ENCODE measurements at regions of chr4 and their contacts with region 1.

Region 1: DNA sequence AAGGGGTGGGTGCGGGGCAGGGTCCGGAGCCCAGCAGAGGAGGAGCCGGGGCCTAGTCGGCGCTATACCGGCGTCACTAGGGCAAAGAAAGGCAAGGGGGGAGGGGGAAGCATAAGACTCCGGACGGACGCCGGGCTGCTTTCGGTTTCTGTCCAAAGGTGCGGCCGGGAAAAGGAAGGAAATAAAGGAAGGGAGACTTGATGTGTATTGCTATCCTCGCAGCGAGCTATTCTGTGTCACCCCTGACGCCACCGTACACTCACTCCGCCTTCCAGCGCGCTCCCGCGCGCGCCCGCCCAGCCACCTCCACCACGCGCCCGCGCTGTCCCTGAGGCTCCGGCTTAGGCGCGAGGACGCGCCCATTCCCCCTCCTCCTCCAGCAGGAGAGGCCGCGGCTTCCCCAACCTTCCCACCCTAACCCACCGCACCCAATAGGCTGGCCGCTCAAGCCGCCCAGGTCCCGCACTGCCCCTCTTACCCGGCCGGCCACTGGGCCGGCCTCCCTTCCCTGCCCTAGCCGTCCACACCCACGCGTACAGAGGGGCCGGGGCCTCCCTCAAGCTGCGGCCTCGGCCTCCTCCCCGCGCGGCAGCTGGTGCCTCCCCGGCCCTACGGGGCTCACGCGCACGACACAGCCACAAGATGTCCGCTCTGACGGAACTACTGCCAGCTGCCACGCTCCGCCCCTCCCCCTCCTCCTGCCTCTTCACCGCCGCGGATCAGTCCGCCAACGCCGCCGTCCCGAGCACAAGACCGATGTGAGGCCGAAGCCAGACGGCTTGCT is at the start of gene UBE2D3:
- DNase-seq: peak; percentile 95 to 97 (median 96)
- H3K4me3 ChIP-seq: peak within 1 kb of the TSS; percentile 96 to 97
- H3K4me3 Mint-ChIP-seq: no peak within 1 kb of the TSS
- H3K27ac ChIP-seq: peak within 1 kb of the TSS; percentile 100
- H3K27ac Mint-ChIP-seq: no peak within 1 kb of the TSS
- H3K4me1 ChIP-seq: peaks cover 43% of the 10 kb centered on the region
- H3K4me1 Mint-ChIP-seq: peaks cover 25 to 42% (median 29%) of the 10 kb centered on the region in 4 donors
- H3K27me3 ChIP-seq: no peaks in the 10 kb centered on the region
- H3K27me3 Mint-ChIP-seq: peaks cover 0 to 2% of the 10 kb centered on the region in 2 donors
- total RNA-seq, gene UBE2D3: 337 to 339 TPM

Region 2: GRCh38 chr4:102344954-102345794 is 481.9 kb before region 1 on chr4 and contains the start of gene SLC39A8:
- CTCF ChIA-PET with region 1: interaction called, 4 read pairs
- POLR2A ChIA-PET with region 1: interaction called, 38 read pairs
- intact Hi-C with region 1: loop called (anchors 1 kb)
- DNase-seq: peak; percentile 86 to 95 (median 89)
- H3K4me3 ChIP-seq: peak within 1 kb of the TSS; percentile 80 to 83
- H3K4me3 Mint-ChIP-seq: peak within 1 kb of the TSS; percentile 86 to 95 (median 94)
- H3K27ac ChIP-seq: peak within 1 kb of the TSS; percentile 91
- H3K27ac Mint-ChIP-seq: peak within 1 kb of the TSS; percentile 86 to 99 (median 98)
- H3K4me1 ChIP-seq: peaks cover 47% of the 10 kb centered on the region
- H3K4me1 Mint-ChIP-seq: peaks cover 24 to 56% (median 42%) of the 10 kb centered on the region in 4 donors
- H3K27me3 ChIP-seq: no peaks in the 10 kb centered on the region
- H3K27me3 Mint-ChIP-seq: no peaks in the 10 kb centered on the region
- total RNA-seq, gene SLC39A8: 24.6 to 25.7 TPM

Region 3: GRCh38 chr4:102500696-102501446 is 326.2 kb before region 1 on chr4 and contains the start of gene NFKB1:
- CTCF ChIA-PET with region 1: no interaction called
- POLR2A ChIA-PET with region 1: interaction called, 41 read pairs
- intact Hi-C with region 1: loop called (anchors 1 kb)
- DNase-seq: peak; percentile 83 to 95 (median 88)
- H3K4me3 ChIP-seq: peak within 1 kb of the TSS; percentile 88 to 97
- H3K4me3 Mint-ChIP-seq: peak within 1 kb of the TSS; percentile 91 to 98 (median 94)
- H3K27ac ChIP-seq: peak within 1 kb of the TSS; percentile 100
- H3K27ac Mint-ChIP-seq: peak within 1 kb of the TSS; percentile 97 to 100 (median 98)
- H3K4me1 ChIP-seq: peaks cover 37% of the 10 kb centered on the region
- H3K4me1 Mint-ChIP-seq: peaks cover 18 to 39% (median 26%) of the 10 kb centered on the region in 4 donors
- H3K27me3 ChIP-seq: no peaks in the 10 kb centered on the region
- H3K27me3 Mint-ChIP-seq: no peaks in the 10 kb centered on the region
- total RNA-seq, gene NFKB1: 79.8 to 84.9 TPM

Region 4: GRCh38 chr4:102627831-102628523 is 199.1 kb before region 1 on chr4:
- CTCF ChIA-PET with region 1: interaction called, 4 read pairs
- POLR2A ChIA-PET with region 1: interaction called, 78 read pairs
- intact Hi-C with region 1: loop called (anchors 2 kb)
- DNase-seq: peak in 1 of 5 donors; percentile 49
- H3K4me3 ChIP-seq: no peak overlapping the region
- H3K4me3 Mint-ChIP-seq: peak overlapping the region in 4 of 8 donors; percentile 13 to 71 (median 38)
- H3K27ac ChIP-seq: no peak overlapping the region
- H3K27ac Mint-ChIP-seq: peak overlapping the region in 5 of 7 donors; percentile 35 to 93 (median 81)
- H3K4me1 ChIP-seq: peaks cover 66% of the 10 kb centered on the region
- H3K4me1 Mint-ChIP-seq: peaks cover 47 to 94% (median 65%) of the 10 kb centered on the region in 4 donors
- H3K27me3 ChIP-seq: no peaks in the 10 kb centered on the region
- H3K27me3 Mint-ChIP-seq: no peaks in the 10 kb centered on the region

Region 5: DNA sequence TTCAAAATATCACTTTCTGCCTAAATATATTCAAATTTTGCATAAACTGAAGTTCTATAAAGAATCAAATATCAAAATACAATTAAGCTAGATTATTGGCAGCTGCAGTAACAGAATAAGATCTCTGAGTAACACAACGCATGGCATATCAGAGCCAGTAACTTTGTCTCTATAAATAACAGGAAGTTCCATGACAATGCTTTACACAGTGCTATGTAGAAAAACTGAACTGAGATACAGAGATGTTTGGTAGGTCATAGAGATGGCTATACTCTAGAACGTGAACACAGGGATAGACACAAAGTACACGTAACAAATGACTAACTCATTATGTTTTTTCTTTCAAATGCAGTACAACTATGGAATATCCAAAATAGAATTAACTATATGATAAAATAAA is 17.9 kb before region 1 on chr4:
- CTCF ChIA-PET with region 1: interaction called, 8 read pairs
- POLR2A ChIA-PET with region 1: interaction called, 161 read pairs
- intact Hi-C with region 1: loop called (anchors 1 kb)
- DNase-seq: no peak
- H3K4me3 ChIP-seq: no peak overlapping the region
- H3K4me3 Mint-ChIP-seq: peak overlapping the region in 2 of 8 donors; percentile 19 to 66
- H3K27ac ChIP-seq: no peak overlapping the region
- H3K27ac Mint-ChIP-seq: peak overlapping the region in 5 of 7 donors; percentile 20 to 69 (median 23)
- H3K4me1 ChIP-seq: peaks cover 89% of the 10 kb centered on the region
- H3K4me1 Mint-ChIP-seq: peaks cover 48 to 93% (median 65%) of the 10 kb centered on the region in 4 donors
- H3K27me3 ChIP-seq: no peaks in the 10 kb centered on the region
- H3K27me3 Mint-ChIP-seq: no peaks in the 10 kb centered on the region

Region 6: DNA sequence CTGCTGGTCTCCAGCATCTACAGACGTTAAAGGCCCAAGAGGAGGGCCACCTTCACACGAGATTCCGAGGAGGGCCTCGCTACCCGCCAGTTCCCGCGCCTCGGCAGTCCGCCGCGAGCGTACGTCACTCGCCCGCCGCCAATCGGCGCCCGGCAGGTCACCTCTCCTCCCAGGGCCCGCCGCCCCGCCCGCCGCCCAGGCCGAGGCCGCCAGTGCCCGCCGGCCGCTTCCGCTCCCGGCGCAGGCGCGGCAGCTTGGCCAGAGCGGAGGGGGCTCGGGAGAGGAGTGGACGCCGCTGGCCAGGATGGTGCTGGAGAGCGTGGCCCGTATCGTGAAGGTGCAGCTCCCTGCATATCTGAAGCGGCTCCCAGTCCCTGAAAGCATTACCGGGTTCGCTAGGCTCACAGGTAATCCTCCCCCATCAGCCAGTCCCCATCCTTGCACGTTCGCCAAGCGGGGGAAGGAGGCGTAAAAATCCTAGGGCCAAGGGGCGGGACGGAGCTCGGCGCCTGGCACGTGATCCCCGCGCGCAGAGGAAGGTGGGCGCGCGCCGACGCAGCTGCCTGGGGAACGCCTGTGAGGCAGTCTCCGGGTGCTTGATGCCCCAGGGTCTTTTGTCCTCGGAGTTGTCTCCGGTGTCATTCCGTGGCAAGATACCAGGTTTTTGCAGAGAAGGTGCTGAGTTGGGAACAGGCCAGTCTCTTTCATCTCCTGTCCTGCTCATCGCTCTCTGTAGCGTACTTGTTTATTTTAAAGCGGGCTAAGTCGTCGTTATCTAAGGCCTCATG is 41.9 kb after region 1 on chr4 and contains the start of gene CISD2:
- CTCF ChIA-PET with region 1: interaction called, 22 read pairs
- POLR2A ChIA-PET with region 1: interaction called, 409 read pairs
- intact Hi-C with region 1: loop called (anchors 1 kb)
- DNase-seq: peak; percentile 92 to 94 (median 92)
- H3K4me3 ChIP-seq: peak within 1 kb of the TSS; percentile 58 to 74
- H3K4me3 Mint-ChIP-seq: peak within 1 kb of the TSS; percentile 91 to 99 (median 95)
- H3K27ac ChIP-seq: peak within 1 kb of the TSS; percentile 91
- H3K27ac Mint-ChIP-seq: peak within 1 kb of the TSS; percentile 95 to 100 (median 99)
- H3K4me1 ChIP-seq: peaks cover 54% of the 10 kb centered on the region
- H3K4me1 Mint-ChIP-seq: peaks cover 39 to 82% (median 50%) of the 10 kb centered on the region in 4 donors
- H3K27me3 ChIP-seq: no peaks in the 10 kb centered on the region
- H3K27me3 Mint-ChIP-seq: no peaks in the 10 kb centered on the region
- total RNA-seq, gene CISD2: 18.5 to 22.0 TPM

Region 7: GRCh38 chr4:103075901-103076739 is 249.0 kb after region 1 on chr4:
- CTCF ChIA-PET with region 1: interaction called, 3 read pairs
- POLR2A ChIA-PET with region 1: interaction called, 20 read pairs
- intact Hi-C with region 1: loop called (anchors 1 kb)
- DNase-seq: peak; percentile 72 to 79 (median 76)
- H3K4me3 ChIP-seq: peak overlapping the region; percentile 26 to 72
- H3K4me3 Mint-ChIP-seq: peak overlapping the region; percentile 94 to 98 (median 98)
- H3K27ac ChIP-seq: peak overlapping the region; percentile 78
- H3K27ac Mint-ChIP-seq: peak overlapping the region; percentile 98 to 99 (median 99)
- H3K4me1 ChIP-seq: peaks cover 37% of the 10 kb centered on the region
- H3K4me1 Mint-ChIP-seq: peaks cover 24 to 58% (median 38%) of the 10 kb centered on the region in 4 donors
- H3K27me3 ChIP-seq: no peaks in the 10 kb centered on the region
- H3K27me3 Mint-ChIP-seq: no peaks in the 10 kb centered on the region